ENCODE measurements at regions of chrX and their contacts with region 1.

Region 1: GRCh38 chrX:10722851-10723250 is 102.5 kb upstream of the MID1 start:
- DNase-seq: peak in 1 of 2 donors; percentile 54
- ATAC-seq: peak in 5 of 8 donors; percentile 25 to 77 (median 75)
- H3K4me3 ChIP-seq: no peak overlapping the region
- H3K27ac ChIP-seq: no peak overlapping the region
- H3K4me1 ChIP-seq: no peaks in the 10 kb centered on the region
- H3K27me3 ChIP-seq: no peaks in the 10 kb centered on the region
- CTCF ChIP-seq: peak; percentile 42 to 79 (median 67)

Region 2: DNA sequence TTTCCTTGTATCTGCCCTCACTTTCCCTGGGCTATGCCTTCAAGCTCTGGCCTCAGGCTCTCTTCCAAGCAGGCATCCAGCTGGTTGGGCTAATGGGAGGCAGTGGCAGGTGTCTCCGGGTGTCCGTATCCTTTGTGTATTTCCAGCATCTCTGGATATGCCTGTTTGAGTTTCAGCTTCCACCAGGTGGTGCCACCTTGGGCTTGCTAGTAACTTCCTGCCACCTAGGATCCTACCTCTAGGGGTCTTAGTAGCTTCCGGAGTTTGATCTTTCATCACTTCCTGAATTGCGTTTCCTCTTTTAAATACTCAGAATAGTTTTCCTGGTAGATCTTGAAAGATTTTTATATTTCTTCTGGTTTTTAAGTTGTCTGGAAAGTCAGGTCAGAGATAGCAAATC is 1967.7 kb before region 1 on chrX:
- intact Hi-C with region 1: no loop called
- DNase-seq: no peak
- ATAC-seq: no peak
- H3K4me3 ChIP-seq: no peak overlapping the region
- H3K27ac ChIP-seq: no peak overlapping the region
- H3K4me1 ChIP-seq: no peaks in the 10 kb centered on the region
- H3K27me3 ChIP-seq: peaks cover 0 to 20% (median 0%) of the 10 kb centered on the region in 7 donors
- CTCF ChIP-seq: no peak

Region 3: DNA sequence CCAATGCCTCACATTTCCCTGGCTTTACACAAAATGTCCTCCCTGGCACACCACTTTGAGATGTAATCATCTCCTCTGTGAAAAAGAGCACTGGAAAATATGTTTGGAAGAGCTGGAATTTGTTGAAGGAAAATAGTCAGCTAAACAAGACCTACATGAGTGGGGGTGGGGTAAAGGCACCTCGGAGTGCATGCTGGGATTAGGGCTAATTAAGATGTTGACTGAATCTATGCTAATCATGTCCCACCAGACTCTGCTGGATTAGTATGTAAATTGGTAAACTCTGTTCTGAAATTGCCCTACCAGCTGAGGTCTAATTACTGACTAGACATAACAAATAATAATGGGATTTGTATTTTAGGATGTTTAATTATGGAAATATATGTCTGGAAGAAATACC is 55.7 kb before region 1 on chrX:
- intact Hi-C with region 1: no loop called
- DNase-seq: no peak
- ATAC-seq: no peak
- H3K4me3 ChIP-seq: no peak overlapping the region
- H3K27ac ChIP-seq: no peak overlapping the region
- H3K4me1 ChIP-seq: no peaks in the 10 kb centered on the region
- H3K27me3 ChIP-seq: no peaks in the 10 kb centered on the region
- CTCF ChIP-seq: no peak

Region 4: GRCh38 chrX:11100281-11101035 is 377.6 kb after region 1 on chrX:
- intact Hi-C with region 1: loop called in 3 of 10 experiments (anchors 10 kb)
- DNase-seq: peak in 1 of 2 donors; percentile 15
- ATAC-seq: peak in 4 of 8 donors; percentile 39 to 61 (median 46)
- H3K4me3 ChIP-seq: no peak overlapping the region
- H3K27ac ChIP-seq: no peak overlapping the region
- H3K4me1 ChIP-seq: peaks cover 0 to 5% (median 0%) of the 10 kb centered on the region in 9 donors
- H3K27me3 ChIP-seq: no peaks in the 10 kb centered on the region
- CTCF ChIP-seq: peak in 7 of 9 donors; percentile 10 to 52 (median 43)

Measured in heart right ventricle (tissue), 16 donors.